Activated CD4-positive, alpha-beta T cell treated with anti-CD3 and anti-CD28 coated beads for 36 hours (primary cell): ENCODE measurements at regions of chr20 and their contacts with region 1.

Region 1: GRCh38 chr20:24100385-24101011 is 111.9 kb upstream of the GGTLC1 start:
- DNase-seq: peak; percentile 75
- ATAC-seq: peak; percentile 90
- H3K4me3 Mint-ChIP-seq: no peak overlapping the region
- H3K27ac Mint-ChIP-seq: peak overlapping the region; percentile 21
- H3K4me1 Mint-ChIP-seq: peaks cover 26% of the 10 kb centered on the region
- H3K27me3 Mint-ChIP-seq: peaks cover 2% of the 10 kb centered on the region

Region 2: DNA sequence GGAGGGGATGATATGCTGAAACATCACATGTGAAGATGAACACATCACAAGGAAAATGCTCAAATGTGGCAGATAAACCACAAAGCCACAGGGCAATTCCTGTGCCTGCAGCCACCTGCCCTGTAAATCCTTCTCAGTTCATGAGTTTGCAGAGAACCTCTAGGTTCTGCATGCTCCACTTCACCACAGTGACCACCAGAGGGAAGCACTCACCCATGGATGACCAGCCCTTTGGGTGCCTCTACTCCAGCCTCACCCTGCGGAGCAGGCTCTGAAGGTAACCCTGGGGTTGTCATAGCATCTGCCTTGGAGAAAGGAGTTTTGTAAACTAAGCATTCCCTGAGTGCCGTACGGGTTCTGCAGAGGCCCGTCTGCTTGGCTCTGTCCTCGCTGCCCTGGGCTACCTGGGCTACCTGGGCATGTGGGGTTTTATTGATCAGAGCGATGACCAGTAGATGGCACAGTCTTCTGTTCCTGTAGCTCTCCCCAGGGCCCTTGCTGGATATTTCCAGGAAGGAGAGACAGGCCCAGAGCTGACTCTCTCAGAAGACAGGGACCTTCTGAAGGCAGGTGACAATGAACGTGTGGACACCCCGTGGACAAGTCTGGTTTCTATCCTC is 318.0 kb before region 1 on chr20:
- CTCF ChIA-PET with region 1: no interaction called
- POLR2A ChIA-PET with region 1: no interaction called
- intact Hi-C with region 1: loop called in 1 of 2 experiments (anchors 10 kb)
- DNase-seq: peak; percentile 12
- ATAC-seq: peak; percentile 71
- H3K4me3 Mint-ChIP-seq: no peak overlapping the region
- H3K27ac Mint-ChIP-seq: no peak overlapping the region
- H3K4me1 Mint-ChIP-seq: no peaks in the 10 kb centered on the region
- H3K27me3 Mint-ChIP-seq: peaks cover 3% of the 10 kb centered on the region

Region 3: DNA sequence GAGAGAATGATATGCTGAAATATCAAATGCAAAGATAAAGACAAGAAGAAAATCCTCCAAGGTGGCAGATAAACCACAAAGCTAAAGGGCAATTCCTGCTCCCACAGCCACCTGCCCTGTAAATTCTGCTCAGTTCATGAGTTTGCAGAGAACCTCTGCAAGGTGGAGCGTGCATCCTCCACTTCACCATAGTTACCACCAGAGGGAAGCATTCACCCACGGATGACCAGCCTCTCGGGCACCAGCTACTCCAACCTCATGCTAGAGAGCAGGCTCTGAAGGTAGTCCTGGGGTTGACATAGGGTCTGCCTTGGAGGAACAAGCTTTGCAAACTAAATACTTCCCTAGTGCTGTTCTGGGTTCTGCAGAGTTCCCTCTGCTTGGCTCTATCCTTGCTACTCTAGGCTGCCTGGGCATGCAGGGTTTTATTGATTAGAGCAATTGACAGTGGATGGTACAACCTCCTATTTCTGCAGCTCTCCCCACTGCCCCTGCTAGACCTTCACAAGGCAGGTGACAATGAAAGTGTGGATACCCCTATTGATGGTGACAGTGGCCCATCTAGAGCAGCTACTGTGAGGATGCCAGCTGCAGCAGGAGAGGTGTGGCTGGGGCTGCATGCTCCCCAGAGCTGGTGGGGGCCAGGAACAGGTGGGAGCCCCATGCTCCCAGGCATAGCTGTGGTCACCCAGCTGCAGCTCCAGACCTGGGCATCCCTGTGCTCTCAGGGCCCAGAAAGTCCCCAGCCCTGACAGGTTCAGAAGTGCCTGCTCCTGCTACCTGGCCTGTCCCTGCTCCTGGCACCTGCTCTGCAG is 163.0 kb before region 1 on chr20:
- CTCF ChIA-PET with region 1: interaction called, 4 read pairs
- POLR2A ChIA-PET with region 1: no interaction called
- intact Hi-C with region 1: loop called (anchors 1 to 2 kb)
- DNase-seq: peak; percentile 74
- ATAC-seq: peak; percentile 90
- H3K4me3 Mint-ChIP-seq: no peak overlapping the region
- H3K27ac Mint-ChIP-seq: no peak overlapping the region
- H3K4me1 Mint-ChIP-seq: no peaks in the 10 kb centered on the region
- H3K27me3 Mint-ChIP-seq: no peaks in the 10 kb centered on the region

Region 4: GRCh38 chr20:24018796-24019195 is 81.7 kb before region 1 on chr20:
- CTCF ChIA-PET with region 1: interaction called, 3 read pairs
- POLR2A ChIA-PET with region 1: no interaction called
- intact Hi-C with region 1: loop called (anchors 5 to 10 kb)
- DNase-seq: no peak
- ATAC-seq: no peak
- H3K4me3 Mint-ChIP-seq: no peak overlapping the region
- H3K27ac Mint-ChIP-seq: no peak overlapping the region
- H3K4me1 Mint-ChIP-seq: peaks cover 12% of the 10 kb centered on the region
- H3K27me3 Mint-ChIP-seq: peaks cover 4% of the 10 kb centered on the region

Region 5: DNA sequence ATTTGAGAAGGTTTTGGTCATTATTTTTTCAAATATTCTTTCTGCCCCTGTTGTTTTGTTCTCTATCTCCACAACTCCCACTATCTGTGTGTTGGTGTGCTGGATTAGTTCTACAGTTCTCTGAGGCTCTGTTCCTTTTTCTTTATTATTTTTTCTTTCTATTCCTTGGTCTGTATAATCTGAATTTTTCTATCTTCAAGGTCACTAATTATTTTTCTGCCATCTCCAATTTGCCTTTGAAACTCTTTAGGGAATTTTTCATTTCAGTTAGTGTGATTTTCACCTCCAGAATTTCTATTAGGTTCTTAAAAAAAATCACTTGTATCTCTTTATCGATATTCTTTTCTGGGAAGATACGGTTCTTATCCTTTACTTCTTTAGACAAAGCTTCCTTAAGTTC is 29.8 kb before region 1 on chr20:
- CTCF ChIA-PET with region 1: no interaction called
- POLR2A ChIA-PET with region 1: no interaction called
- intact Hi-C with region 1: no loop called
- DNase-seq: no peak
- ATAC-seq: no peak
- H3K4me3 Mint-ChIP-seq: no peak overlapping the region
- H3K27ac Mint-ChIP-seq: no peak overlapping the region
- H3K4me1 Mint-ChIP-seq: peaks cover 12% of the 10 kb centered on the region
- H3K27me3 Mint-ChIP-seq: no peaks in the 10 kb centered on the region

Region 6: DNA sequence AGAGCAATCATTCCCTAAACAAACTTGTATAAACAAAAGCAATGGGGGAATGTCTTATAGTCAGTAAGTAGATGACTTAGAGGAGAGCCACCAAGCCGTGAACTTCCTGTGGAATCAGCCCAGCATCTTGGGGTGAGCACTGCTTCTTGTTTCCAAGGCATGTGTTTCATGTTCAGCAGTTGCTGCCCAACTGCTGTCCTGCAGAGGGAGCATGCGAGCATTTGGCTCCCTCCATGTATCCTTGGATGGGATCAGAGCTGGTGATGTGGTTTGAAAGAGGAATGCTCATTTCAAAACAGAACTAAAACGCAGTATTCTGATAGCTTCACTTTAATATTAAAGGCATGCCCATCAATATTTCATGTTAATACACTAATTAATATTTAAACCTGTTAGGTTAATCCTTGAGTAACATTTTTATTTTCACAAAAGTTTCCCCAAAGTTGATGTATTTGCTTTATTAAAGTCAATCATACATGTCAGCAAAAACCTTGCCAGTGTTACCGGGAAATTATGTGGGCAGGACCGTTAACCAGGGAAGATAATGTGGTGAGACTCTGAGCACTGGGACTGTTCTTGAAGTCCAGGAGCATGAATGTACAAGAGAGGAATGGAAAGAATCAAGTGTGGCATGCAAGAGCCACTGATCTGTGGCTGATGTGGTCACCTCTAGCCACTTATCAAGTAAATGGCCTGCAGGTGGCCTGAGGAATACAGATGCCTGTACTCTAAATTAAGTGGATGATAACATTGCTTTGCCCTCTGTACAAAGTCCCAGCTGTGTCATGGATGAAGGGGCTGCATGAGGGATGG is 60.3 kb after region 1 on chr20:
- CTCF ChIA-PET with region 1: no interaction called
- POLR2A ChIA-PET with region 1: no interaction called
- intact Hi-C with region 1: loop called in 1 of 2 experiments (anchors 1 kb)
- DNase-seq: peak; percentile 55
- ATAC-seq: no peak
- H3K4me3 Mint-ChIP-seq: no peak overlapping the region
- H3K27ac Mint-ChIP-seq: no peak overlapping the region
- H3K4me1 Mint-ChIP-seq: no peaks in the 10 kb centered on the region
- H3K27me3 Mint-ChIP-seq: no peaks in the 10 kb centered on the region

Region 7: DNA sequence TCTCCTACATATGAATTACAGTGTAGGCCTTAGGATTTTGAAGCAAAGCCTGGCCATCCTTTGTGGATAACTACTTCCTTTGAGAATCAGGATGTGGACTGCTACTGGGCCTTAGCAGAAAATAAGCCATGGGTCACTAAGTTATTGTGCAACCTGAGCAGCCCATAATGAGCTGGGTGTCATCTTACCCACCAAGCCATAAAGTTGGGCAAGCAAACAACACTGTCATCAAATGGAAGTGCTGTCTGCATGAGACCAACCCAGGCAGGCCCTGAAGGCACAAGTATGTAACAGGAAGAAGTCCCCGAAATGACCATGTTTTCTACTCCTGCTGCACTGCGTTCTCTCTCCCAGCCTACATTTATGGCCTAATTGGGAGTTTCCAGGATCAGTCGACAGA is 93.6 kb after region 1 on chr20:
- CTCF ChIA-PET with region 1: no interaction called
- POLR2A ChIA-PET with region 1: no interaction called
- intact Hi-C with region 1: no loop called
- DNase-seq: no peak
- ATAC-seq: no peak
- H3K4me3 Mint-ChIP-seq: no peak overlapping the region
- H3K27ac Mint-ChIP-seq: no peak overlapping the region
- H3K4me1 Mint-ChIP-seq: no peaks in the 10 kb centered on the region
- H3K27me3 Mint-ChIP-seq: peaks cover 3% of the 10 kb centered on the region

Region 8: GRCh38 chr20:24406750-24407510 is 306.4 kb after region 1 on chr20:
- CTCF ChIA-PET with region 1: no interaction called
- POLR2A ChIA-PET with region 1: no interaction called
- intact Hi-C with region 1: no loop called
- DNase-seq: peak; percentile 19
- ATAC-seq: peak; percentile 86
- H3K4me3 Mint-ChIP-seq: no peak overlapping the region
- H3K27ac Mint-ChIP-seq: peak overlapping the region; percentile 84
- H3K4me1 Mint-ChIP-seq: peaks cover 20% of the 10 kb centered on the region
- H3K27me3 Mint-ChIP-seq: no peaks in the 10 kb centered on the region